ENCODE measurements at regions of chr5 and their contacts with region 1.

Region 1: DNA sequence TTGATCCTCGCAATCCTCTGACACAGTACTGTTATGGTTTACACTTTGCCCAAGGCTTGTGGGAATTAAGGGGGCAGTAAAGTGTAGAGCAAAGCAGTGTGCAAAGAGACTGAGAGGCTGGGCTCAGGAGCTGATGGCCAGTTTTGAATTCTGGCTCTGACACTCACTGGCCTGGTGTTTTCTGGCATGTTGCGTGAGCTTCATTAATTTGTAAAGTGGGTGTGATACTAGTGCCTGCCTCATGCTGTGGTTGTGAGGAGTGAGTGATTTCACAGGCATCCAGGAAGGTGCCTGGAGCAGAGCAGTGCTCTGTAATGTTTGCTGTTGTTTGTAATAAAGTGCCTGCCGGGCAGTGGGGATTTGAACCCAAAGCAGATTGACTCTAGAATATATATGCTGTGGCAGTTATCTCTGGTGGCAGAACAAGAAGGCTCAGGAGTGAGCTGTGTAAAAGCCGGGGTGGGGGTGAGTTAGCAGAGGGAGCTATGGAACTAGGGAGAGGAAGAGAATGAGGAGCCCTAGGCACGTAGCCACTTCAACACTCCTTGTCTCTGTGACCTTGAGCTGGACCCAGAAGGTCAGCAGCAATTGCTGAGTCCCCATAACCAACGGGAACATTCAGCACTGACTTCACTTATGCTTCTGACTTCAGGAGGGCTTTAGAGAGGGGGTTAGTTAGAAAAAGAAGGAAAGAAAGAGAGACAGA is 108.5 kb downstream of the DOCK2 start:
- DNase-seq: no peak
- ATAC-seq: no peak
- H3K4me3 Mint-ChIP-seq: no peak overlapping the region
- H3K27ac Mint-ChIP-seq: no peak overlapping the region
- H3K4me1 Mint-ChIP-seq: no peaks in the 10 kb centered on the region
- H3K27me3 Mint-ChIP-seq: no peaks in the 10 kb centered on the region
- CTCF ChIP-seq: no peak

Region 2: GRCh38 chr5:169706758-169707691 is 38.6 kb before region 1 on chr5:
- CTCF ChIA-PET with region 1: no interaction called
- POLR2A ChIA-PET with region 1: no interaction called
- intact Hi-C with region 1: loop called (anchors 5 kb)
- DNase-seq: no peak
- ATAC-seq: no peak
- H3K4me3 Mint-ChIP-seq: no peak overlapping the region
- H3K27ac Mint-ChIP-seq: peak overlapping the region; percentile 75
- H3K4me1 Mint-ChIP-seq: peaks cover 52% of the 10 kb centered on the region
- H3K27me3 Mint-ChIP-seq: no peaks in the 10 kb centered on the region
- CTCF ChIP-seq: no peak

Region 3: GRCh38 chr5:170380361-170380951 is 634.9 kb after region 1 on chr5:
- CTCF ChIA-PET with region 1: no interaction called
- POLR2A ChIA-PET with region 1: no interaction called
- intact Hi-C with region 1: no loop called
- DNase-seq: no peak
- ATAC-seq: no peak
- H3K4me3 Mint-ChIP-seq: no peak overlapping the region
- H3K27ac Mint-ChIP-seq: no peak overlapping the region
- H3K4me1 Mint-ChIP-seq: no peaks in the 10 kb centered on the region
- H3K27me3 Mint-ChIP-seq: peaks cover 5% of the 10 kb centered on the region
- CTCF ChIP-seq: no peak

Measured in activated B cell treated with CpG ODN at 0.5 μM for 24 hours (primary cell).